CD8-positive, alpha-beta T cell (primary cell): ENCODE measurements at regions of chr16 and their contacts with region 1.

Region 1: GRCh38 chr16:25111403-25112166 is at the start of gene LCMT1:
- DNase-seq: peak; percentile 79 to 97 (median 89)
- ATAC-seq: peak; percentile 89
- H3K4me3 ChIP-seq: peak within 1 kb of the TSS; percentile 85 to 90
- H3K4me3 Mint-ChIP-seq: peak within 1 kb of the TSS; percentile 95
- H3K27ac ChIP-seq: peak within 1 kb of the TSS; percentile 62 to 70
- H3K27ac Mint-ChIP-seq: peak within 1 kb of the TSS; percentile 93
- H3K4me1 ChIP-seq: peaks cover 29% of the 10 kb centered on the region
- H3K4me1 Mint-ChIP-seq: peaks cover 68% of the 10 kb centered on the region
- H3K27me3 ChIP-seq: no peaks in the 10 kb centered on the region
- H3K27me3 Mint-ChIP-seq: no peaks in the 10 kb centered on the region
- CTCF ChIP-seq: no peak
- total RNA-seq, gene LCMT1: 20.9 to 28.6 TPM

Region 2: GRCh38 chr16:24729362-24729984 is 382.1 kb before region 1 on chr16 and contains the start of gene TNRC6A:
- CTCF ChIA-PET with region 1: no interaction called
- POLR2A ChIA-PET with region 1: no interaction called
- intact Hi-C with region 1: loop called in 1 of 2 experiments (anchors 10 kb)
- DNase-seq: peak; percentile 61 to 92 (median 76)
- ATAC-seq: peak; percentile 78
- H3K4me3 ChIP-seq: peak within 1 kb of the TSS; percentile 93 to 97
- H3K4me3 Mint-ChIP-seq: peak within 1 kb of the TSS; percentile 95
- H3K27ac ChIP-seq: peak within 1 kb of the TSS; percentile 97 to 98
- H3K27ac Mint-ChIP-seq: peak within 1 kb of the TSS; percentile 98
- H3K4me1 ChIP-seq: peaks cover 40% of the 10 kb centered on the region
- H3K4me1 Mint-ChIP-seq: peaks cover 45% of the 10 kb centered on the region
- H3K27me3 ChIP-seq: no peaks in the 10 kb centered on the region
- H3K27me3 Mint-ChIP-seq: no peaks in the 10 kb centered on the region
- CTCF ChIP-seq: no peak
- total RNA-seq, gene TNRC6A: 65.2 to 73.4 TPM

Region 3: DNA sequence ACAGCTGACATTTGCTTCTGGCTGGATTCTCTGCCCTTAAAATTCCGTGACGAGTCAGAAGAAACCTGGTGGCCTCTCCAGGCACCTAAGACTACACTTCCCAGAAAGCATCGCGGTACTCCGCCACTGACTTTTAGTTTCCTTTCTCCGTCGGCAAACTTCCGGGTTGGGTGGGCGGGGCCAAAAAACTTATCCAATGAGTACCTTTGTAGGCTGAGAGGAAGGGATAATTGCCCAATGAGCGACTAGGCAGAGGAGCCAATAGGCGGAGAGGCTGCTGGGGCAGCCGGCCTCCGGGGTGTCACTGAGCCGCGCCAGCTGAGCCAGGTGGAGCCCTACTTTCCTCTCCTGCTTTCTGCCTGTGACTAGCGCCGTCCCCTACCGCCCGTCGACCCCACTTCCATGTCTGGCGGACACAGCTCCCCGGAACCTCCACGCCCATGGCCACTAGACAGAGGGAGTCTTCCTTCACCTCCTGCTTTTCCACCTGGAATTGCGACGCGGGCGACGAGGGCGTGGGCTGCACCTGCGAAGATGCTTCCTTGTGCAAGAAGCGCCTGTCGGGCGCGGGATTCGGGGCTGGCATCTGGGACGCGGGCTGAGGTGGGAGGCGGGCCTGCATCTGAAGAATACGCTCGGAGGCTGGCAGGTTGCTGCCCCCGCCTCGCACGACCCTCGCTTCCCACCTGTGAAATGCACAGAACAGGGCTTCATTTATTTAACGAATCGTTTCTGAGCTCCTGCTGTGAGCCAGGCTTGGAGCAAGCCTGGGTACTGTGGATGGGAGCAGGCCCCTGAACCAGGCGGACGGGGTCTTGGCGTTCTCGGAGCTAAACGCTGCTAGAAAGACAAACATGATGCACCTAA is 79.9 kb before region 1 on chr16:
- CTCF ChIA-PET with region 1: interaction called, 10 read pairs
- POLR2A ChIA-PET with region 1: interaction called, 3 read pairs
- intact Hi-C with region 1: loop called (anchors 1 kb)
- DNase-seq: peak; percentile 79 to 97 (median 90)
- ATAC-seq: peak; percentile 99
- H3K4me3 ChIP-seq: peak overlapping the region; percentile 88 to 94
- H3K4me3 Mint-ChIP-seq: peak overlapping the region; percentile 96
- H3K27ac ChIP-seq: peak overlapping the region; percentile 65 to 68
- H3K27ac Mint-ChIP-seq: peak overlapping the region; percentile 94
- H3K4me1 ChIP-seq: peaks cover 14% of the 10 kb centered on the region
- H3K4me1 Mint-ChIP-seq: peaks cover 39% of the 10 kb centered on the region
- H3K27me3 ChIP-seq: no peaks in the 10 kb centered on the region
- H3K27me3 Mint-ChIP-seq: no peaks in the 10 kb centered on the region
- CTCF ChIP-seq: no peak

Region 4: DNA sequence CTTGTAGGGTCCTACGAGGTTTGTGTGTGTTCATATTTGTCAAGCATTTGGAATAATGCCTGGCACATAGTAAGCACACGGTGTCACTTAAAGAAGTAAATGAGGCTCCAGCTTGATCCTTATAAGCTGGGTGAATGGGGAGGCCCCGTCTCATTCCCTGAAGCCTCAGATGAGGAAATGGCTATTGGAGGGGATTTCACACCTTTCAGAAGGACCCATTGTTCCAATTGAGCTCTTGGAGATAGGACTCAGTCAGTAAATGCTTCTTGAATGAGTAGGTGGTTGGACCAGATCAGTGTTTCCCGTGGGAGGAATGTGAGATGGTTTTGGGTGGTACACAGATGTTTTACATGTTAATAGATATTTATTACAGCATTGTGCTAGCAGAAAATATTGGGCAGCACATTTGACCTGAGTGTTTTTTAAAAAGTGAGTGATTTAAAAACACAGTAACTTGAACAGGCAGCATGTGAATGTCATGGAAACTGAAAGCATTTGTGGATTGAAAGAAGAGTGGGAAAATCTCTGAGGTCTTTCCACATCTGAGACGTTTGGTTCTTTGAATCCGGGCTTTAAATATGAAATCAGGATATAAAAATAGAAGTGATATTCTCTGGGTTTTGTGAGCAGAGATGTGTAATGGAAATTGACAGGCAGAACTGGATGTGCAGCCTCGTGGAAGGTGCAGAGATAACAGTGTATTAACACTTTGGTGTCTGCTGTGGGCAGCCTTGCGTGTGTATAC is 60.0 kb before region 1 on chr16:
- CTCF ChIA-PET with region 1: interaction called, 79 read pairs
- POLR2A ChIA-PET with region 1: interaction called, 19 read pairs
- intact Hi-C with region 1: loop called (anchors 1 kb)
- DNase-seq: peak in 1 of 9 experiments; percentile 15
- ATAC-seq: no peak
- H3K4me3 ChIP-seq: no peak overlapping the region
- H3K4me3 Mint-ChIP-seq: peak overlapping the region; percentile 36
- H3K27ac ChIP-seq: peak overlapping the region in 1 of 2 experiments; percentile 88
- H3K27ac Mint-ChIP-seq: peak overlapping the region; percentile 79
- H3K4me1 ChIP-seq: peaks cover 44% of the 10 kb centered on the region
- H3K4me1 Mint-ChIP-seq: peaks cover 50% of the 10 kb centered on the region
- H3K27me3 ChIP-seq: no peaks in the 10 kb centered on the region
- H3K27me3 Mint-ChIP-seq: no peaks in the 10 kb centered on the region
- CTCF ChIP-seq: no peak

Region 5: DNA sequence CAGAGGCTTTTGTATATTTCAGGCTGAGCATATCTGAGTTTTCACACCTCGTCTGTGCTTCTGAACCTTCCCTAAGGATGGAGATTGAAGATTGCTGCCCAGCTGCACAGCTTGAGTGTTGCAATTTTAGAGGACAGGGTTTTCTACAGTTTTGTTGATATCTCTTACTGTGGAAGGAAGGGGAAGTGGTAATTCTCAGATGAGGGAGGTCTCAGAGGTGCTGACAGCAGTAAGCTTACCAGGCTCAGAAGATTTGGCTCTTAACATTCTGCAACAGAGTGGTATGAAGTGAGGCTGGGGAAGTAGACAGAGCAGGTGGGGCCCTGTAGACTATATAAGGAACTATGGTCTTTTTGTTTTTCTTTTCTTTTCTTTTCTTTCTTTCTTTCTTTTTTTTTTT is 50.7 kb before region 1 on chr16:
- CTCF ChIA-PET with region 1: interaction called, 74 read pairs
- POLR2A ChIA-PET with region 1: interaction called, 30 read pairs
- intact Hi-C with region 1: loop called (anchors 1 to 2 kb)
- DNase-seq: peak in 7 of 9 experiments; percentile 17 to 80 (median 37)
- ATAC-seq: peak; percentile 99
- H3K4me3 ChIP-seq: peak overlapping the region in 1 of 2 experiments; percentile 18
- H3K4me3 Mint-ChIP-seq: peak overlapping the region; percentile 77
- H3K27ac ChIP-seq: peak overlapping the region; percentile 34 to 76
- H3K27ac Mint-ChIP-seq: peak overlapping the region; percentile 94
- H3K4me1 ChIP-seq: peaks cover 57% of the 10 kb centered on the region
- H3K4me1 Mint-ChIP-seq: peaks cover 66% of the 10 kb centered on the region
- H3K27me3 ChIP-seq: no peaks in the 10 kb centered on the region
- H3K27me3 Mint-ChIP-seq: no peaks in the 10 kb centered on the region
- CTCF ChIP-seq: no peak

Region 6: GRCh38 chr16:25066747-25067631 is 44.6 kb before region 1 on chr16:
- CTCF ChIA-PET with region 1: interaction called, 62 read pairs
- POLR2A ChIA-PET with region 1: interaction called, 30 read pairs
- intact Hi-C with region 1: loop called (anchors 1 to 2 kb)
- DNase-seq: peak; percentile 63 to 92 (median 82)
- ATAC-seq: peak; percentile 97
- H3K4me3 ChIP-seq: peak overlapping the region; percentile 65 to 70
- H3K4me3 Mint-ChIP-seq: peak overlapping the region; percentile 95
- H3K27ac ChIP-seq: peak overlapping the region; percentile 61 to 86
- H3K27ac Mint-ChIP-seq: peak overlapping the region; percentile 97
- H3K4me1 ChIP-seq: peaks cover 42% of the 10 kb centered on the region
- H3K4me1 Mint-ChIP-seq: peaks cover 59% of the 10 kb centered on the region
- H3K27me3 ChIP-seq: no peaks in the 10 kb centered on the region
- H3K27me3 Mint-ChIP-seq: no peaks in the 10 kb centered on the region
- CTCF ChIP-seq: no peak

Region 7: DNA sequence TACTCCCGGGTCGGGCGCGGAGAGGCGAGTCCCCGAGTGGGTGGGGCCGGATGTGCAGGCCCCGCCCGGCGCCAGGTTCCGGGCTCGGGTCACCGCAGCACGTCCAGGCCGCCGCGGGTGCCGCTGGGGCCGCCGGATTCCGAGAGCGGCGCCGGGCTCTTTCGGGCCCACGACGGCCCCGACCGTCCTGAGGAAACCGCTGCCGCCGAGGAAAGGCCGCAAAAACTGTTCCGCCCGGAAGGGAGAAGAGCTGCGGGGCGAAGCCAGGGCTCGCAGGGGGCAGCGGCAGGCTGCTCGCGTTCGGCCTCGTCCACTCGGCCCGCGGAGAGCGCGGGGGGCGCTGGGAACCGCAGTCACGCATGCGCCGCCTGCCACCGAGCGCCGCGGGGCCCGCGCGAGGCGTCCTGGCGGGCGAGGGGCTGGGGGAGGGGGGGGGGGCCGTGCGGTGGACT is 145.9 kb after region 1 on chr16 and contains the start of gene ZKSCAN2:
- CTCF ChIA-PET with region 1: no interaction called
- POLR2A ChIA-PET with region 1: no interaction called
- intact Hi-C with region 1: loop called (anchors 2 to 5 kb)
- DNase-seq: peak; percentile 57 to 90 (median 77)
- ATAC-seq: peak; percentile 79
- H3K4me3 ChIP-seq: peak within 1 kb of the TSS; percentile 68 to 86
- H3K4me3 Mint-ChIP-seq: peak within 1 kb of the TSS; percentile 96
- H3K27ac ChIP-seq: peak within 1 kb of the TSS; percentile 79 to 94
- H3K27ac Mint-ChIP-seq: peak within 1 kb of the TSS; percentile 95
- H3K4me1 ChIP-seq: peaks cover 38% of the 10 kb centered on the region
- H3K4me1 Mint-ChIP-seq: peaks cover 62% of the 10 kb centered on the region
- H3K27me3 ChIP-seq: no peaks in the 10 kb centered on the region
- H3K27me3 Mint-ChIP-seq: no peaks in the 10 kb centered on the region
- CTCF ChIP-seq: no peak
- total RNA-seq, gene ZKSCAN2: 9.3 to 9.4 TPM